ENCODE measurements at regions of chrX and their contacts with region 1.

Region 1: GRCh38 chrX:18886344-18887161 is 97.4 kb downstream of the PHKA2 start:
- DNase-seq: peak; percentile 56 to 85
- ATAC-seq: peak; percentile 71 to 78
- H3K4me3 ChIP-seq: peak overlapping the region; percentile 45 to 49 (median 48)
- H3K27ac ChIP-seq: peak overlapping the region; percentile 84 to 90 (median 86)
- H3K4me1 ChIP-seq: peaks cover 12 to 20% of the 10 kb centered on the region in 2 donors
- H3K27me3 ChIP-seq: no peaks in the 10 kb centered on the region
- CTCF ChIP-seq: peak; percentile 51 to 66 (median 65)
- POLR2A ChIP-seq: peak; percentile 33 to 40

Region 2: GRCh38 chrX:17736856-17737706 is 1149.5 kb before region 1 on chrX and contains the start of gene SCML1:
- in situ Hi-C with region 1: no loop called
- intact Hi-C with region 1: loop called (anchors 5 kb)
- DNase-seq: peak; percentile 96 to 98
- ATAC-seq: peak; percentile 85 to 86
- H3K4me3 ChIP-seq: peak within 1 kb of the TSS; percentile 65 to 77 (median 76)
- H3K27ac ChIP-seq: peak within 1 kb of the TSS; percentile 88 to 98 (median 96)
- H3K4me1 ChIP-seq: peaks cover 7 to 25% of the 10 kb centered on the region in 2 donors
- H3K27me3 ChIP-seq: no peaks in the 10 kb centered on the region
- CTCF ChIP-seq: no peak
- POLR2A ChIP-seq: peak; percentile 79 to 80
- total RNA-seq, gene SCML1: 5.6 to 29.0 (median 5.8) TPM

Region 3: DNA sequence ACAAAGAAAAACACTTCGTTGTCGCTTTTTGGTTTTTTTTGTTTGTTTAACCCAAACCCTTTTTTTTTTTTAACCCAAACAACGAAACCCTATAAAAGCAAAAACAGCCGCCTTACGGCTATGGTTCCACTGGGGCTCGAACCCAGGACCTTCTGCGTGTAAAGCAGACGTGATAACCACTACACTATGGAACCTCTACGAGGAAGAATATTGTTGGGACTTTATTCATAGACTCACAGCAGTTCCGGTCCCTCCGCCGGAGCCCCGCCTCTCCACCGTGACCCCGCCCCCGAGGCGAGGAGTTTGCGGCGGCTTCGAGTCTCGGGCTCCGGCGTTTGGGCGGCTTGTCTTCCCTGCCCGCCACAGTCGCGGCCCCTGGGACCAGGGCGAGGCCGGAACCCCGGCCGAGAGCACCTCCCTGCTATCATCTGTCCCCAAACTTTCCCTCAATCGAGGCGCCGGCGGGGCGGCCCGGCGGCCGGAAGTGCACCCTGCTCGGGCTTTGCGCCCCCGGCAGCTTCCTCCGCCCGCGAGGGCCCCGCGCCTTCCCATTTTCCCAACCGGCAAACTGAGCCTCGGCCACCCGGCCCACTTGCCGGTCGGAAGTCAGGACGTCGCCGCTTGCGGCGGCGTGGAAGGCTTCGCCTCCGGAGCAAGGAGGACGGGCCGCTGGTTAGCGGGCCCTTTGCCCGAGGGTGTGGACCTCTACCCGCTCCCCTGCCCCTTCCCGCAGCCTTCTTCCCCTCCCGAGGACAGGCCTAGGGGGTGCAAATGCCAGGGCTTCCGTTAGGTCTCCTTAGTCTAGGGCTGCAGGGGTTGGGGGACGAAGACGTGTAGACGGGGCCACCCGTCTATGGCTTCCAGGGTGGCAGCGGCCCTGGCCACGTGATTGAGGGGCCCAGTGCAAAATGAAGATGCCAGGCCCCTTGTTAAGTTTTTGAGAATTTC is 211.5 kb before region 1 on chrX:
- in situ Hi-C with region 1: loop called in 3 of 4 experiments (anchors 25 kb)
- intact Hi-C with region 1: loop called (anchors 2 kb)
- DNase-seq: peak; percentile 35 to 58
- ATAC-seq: peak; percentile 89 to 91
- H3K4me3 ChIP-seq: peak overlapping the region; percentile 66 to 79 (median 70)
- H3K27ac ChIP-seq: peak overlapping the region; percentile 82 to 89 (median 85)
- H3K4me1 ChIP-seq: peaks cover 0 to 4% of the 10 kb centered on the region in 2 donors
- H3K27me3 ChIP-seq: no peaks in the 10 kb centered on the region
- CTCF ChIP-seq: no peak
- POLR2A ChIP-seq: peak; percentile 24 to 38

Region 4: GRCh38 chrX:18833071-18833731 is 53.4 kb before region 1 on chrX:
- in situ Hi-C with region 1: no loop called
- intact Hi-C with region 1: loop called (anchors 2 kb)
- DNase-seq: peak; percentile 64 to 82
- ATAC-seq: peak; percentile 98 to 99
- H3K4me3 ChIP-seq: peak overlapping the region; percentile 39 to 50 (median 47)
- H3K27ac ChIP-seq: peak overlapping the region; percentile 80 to 89 (median 86)
- H3K4me1 ChIP-seq: peaks cover 0 to 3% of the 10 kb centered on the region in 2 donors
- H3K27me3 ChIP-seq: no peaks in the 10 kb centered on the region
- CTCF ChIP-seq: no peak
- POLR2A ChIP-seq: peak; percentile 54 to 63